ENCODE measurements at regions of chr10 and their contacts with region 1.

Region 1: GRCh38 chr10:24503461-24504320 is 220.0 kb downstream of the ARHGAP21 start:
- DNase-seq: no peak
- ATAC-seq: peak; percentile 33 to 60
- H3K4me3 ChIP-seq: no peak overlapping the region
- H3K27ac ChIP-seq: peak overlapping the region; percentile 5 to 45 (median 17)
- H3K4me1 ChIP-seq: peaks cover 3 to 6% of the 10 kb centered on the region in 2 donors
- H3K27me3 ChIP-seq: no peaks in the 10 kb centered on the region
- CTCF ChIP-seq: peak; percentile 17 to 57 (median 53)
- POLR2A ChIP-seq: no peak

Region 2: DNA sequence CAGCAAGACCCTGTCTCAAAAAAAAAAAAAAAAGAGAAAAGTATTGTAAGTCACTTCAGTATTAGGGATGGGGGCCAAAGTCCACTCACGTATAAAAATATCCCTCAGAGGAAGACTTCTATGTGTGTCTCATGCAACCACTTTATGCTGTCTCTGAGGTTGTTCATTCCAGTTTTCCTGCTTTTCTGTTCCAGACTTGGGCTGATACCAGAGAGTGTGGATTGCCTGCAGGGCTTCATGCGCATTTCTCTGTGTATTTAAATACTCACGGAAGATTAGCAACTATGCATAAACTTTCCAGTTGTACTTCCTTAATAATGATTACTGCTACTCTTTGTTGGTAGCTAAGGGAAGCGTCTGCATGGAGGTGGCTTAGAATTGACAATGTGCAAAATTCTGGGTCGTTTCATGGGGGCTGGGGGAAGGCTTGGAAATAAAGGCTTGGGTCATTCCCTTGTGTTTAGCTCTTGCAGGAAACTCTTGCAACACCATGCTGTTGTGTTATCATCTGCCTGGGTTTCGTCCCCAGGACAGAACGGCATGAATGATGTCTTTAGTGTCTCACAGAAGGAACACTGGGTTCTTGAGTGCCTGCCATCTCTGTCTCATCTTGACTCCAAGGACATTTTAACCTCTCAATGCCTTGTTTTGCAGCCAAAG is 240.6 kb before region 1 on chr10:
- in situ Hi-C with region 1: no loop called
- intact Hi-C with region 1: no loop called
- DNase-seq: peak; percentile 96
- ATAC-seq: peak; percentile 88 to 89
- H3K4me3 ChIP-seq: peak overlapping the region; percentile 2 to 33 (median 24)
- H3K27ac ChIP-seq: peak overlapping the region; percentile 94 to 98 (median 96)
- H3K4me1 ChIP-seq: peaks cover 72 to 83% of the 10 kb centered on the region in 2 donors
- H3K27me3 ChIP-seq: no peaks in the 10 kb centered on the region
- CTCF ChIP-seq: no peak
- POLR2A ChIP-seq: peak in 1 of 2 donors; percentile 15

Region 3: DNA sequence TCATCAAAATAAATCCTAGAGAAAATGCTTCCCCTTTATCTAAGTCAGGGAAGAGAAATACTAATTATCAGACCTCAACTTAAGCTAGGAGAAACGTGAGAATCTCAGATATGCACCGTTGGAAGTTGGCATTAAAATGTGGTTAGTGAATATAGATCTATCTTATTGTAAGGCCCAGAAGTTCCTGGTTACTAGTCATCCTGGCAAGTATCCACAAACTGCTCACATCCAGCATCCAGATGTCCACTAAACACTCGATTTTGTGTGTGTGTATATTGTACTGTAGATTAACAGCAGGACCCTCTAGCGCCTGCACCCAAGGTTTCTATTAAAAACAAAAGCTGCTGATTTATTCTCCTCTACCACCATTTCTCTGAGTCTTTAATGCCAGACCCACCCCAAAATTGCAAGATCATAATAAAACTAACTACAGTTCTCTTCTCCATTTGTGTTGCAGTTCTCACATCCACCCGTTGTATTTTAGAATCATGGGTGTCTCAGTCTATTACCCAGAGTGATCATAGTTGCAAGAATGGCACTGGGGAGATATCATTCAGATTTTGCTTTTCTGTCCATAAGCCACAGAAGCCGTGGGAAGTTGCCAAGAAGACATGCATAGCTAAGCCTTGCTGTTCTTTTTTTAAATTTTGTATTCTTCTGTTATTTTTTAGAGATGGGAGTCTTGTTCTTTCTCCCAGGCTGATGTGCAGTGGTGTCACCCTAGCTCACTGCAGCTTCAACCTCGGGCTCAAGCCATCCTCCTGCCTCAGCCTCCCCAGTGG is 129.4 kb before region 1 on chr10:
- in situ Hi-C with region 1: loop called in 2 of 4 experiments (anchors 25 kb)
- intact Hi-C with region 1: loop called (anchors 5 kb)
- DNase-seq: no peak
- ATAC-seq: no peak
- H3K4me3 ChIP-seq: no peak overlapping the region
- H3K27ac ChIP-seq: peak overlapping the region in 2 of 4 donors; percentile 12 to 97
- H3K4me1 ChIP-seq: peaks cover 41% of the 10 kb centered on the region in 2 donors
- H3K27me3 ChIP-seq: no peaks in the 10 kb centered on the region
- CTCF ChIP-seq: no peak
- POLR2A ChIP-seq: no peak

Region 4: DNA sequence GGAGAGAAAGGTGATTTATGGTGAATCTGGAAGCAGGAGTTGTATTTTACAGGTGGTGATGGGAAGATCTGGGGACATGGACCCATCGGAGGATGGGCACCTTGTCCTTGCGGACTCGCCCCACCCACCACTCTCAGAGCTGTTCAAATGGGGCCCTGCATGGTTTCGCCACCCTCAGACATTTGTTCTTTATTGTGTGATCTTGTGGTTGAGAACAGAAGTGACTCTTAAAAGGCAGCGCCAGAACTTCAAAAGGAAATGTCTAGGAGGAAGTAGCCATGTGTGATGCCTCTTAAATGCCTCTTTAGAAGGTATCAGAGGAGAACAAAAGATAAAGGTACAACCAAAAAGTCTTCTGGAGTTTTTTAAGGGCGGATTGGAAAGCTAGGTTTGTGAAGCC is 89.1 kb before region 1 on chr10:
- in situ Hi-C with region 1: no loop called
- intact Hi-C with region 1: no loop called
- DNase-seq: no peak
- ATAC-seq: no peak
- H3K4me3 ChIP-seq: no peak overlapping the region
- H3K27ac ChIP-seq: peak overlapping the region; percentile 84 to 97 (median 92)
- H3K4me1 ChIP-seq: peaks cover 54 to 57% of the 10 kb centered on the region in 2 donors
- H3K27me3 ChIP-seq: no peaks in the 10 kb centered on the region
- CTCF ChIP-seq: no peak
- POLR2A ChIP-seq: no peak

Region 5: GRCh38 chr10:24465891-24466818 is 37.5 kb before region 1 on chr10:
- in situ Hi-C with region 1: no loop called
- intact Hi-C with region 1: loop called (anchors 5 kb)
- DNase-seq: peak; percentile 45 to 53
- ATAC-seq: peak; percentile 53 to 70
- H3K4me3 ChIP-seq: peak overlapping the region; percentile 7 to 53 (median 34)
- H3K27ac ChIP-seq: peak overlapping the region; percentile 69 to 87 (median 83)
- H3K4me1 ChIP-seq: peaks cover 88% of the 10 kb centered on the region in 2 donors
- H3K27me3 ChIP-seq: no peaks in the 10 kb centered on the region
- CTCF ChIP-seq: no peak
- POLR2A ChIP-seq: peak; percentile 20 to 75

Region 6: GRCh38 chr10:24483489-24484100 is 20.1 kb before region 1 on chr10:
- in situ Hi-C with region 1: no loop called
- intact Hi-C with region 1: no loop called
- DNase-seq: peak in 1 of 2 donors; percentile 51
- ATAC-seq: peak; percentile 61 to 74
- H3K4me3 ChIP-seq: no peak overlapping the region
- H3K27ac ChIP-seq: peak overlapping the region; percentile 40 to 69 (median 57)
- H3K4me1 ChIP-seq: peaks cover 25 to 38% of the 10 kb centered on the region in 2 donors
- H3K27me3 ChIP-seq: no peaks in the 10 kb centered on the region
- CTCF ChIP-seq: no peak
- POLR2A ChIP-seq: no peak

Region 7: DNA sequence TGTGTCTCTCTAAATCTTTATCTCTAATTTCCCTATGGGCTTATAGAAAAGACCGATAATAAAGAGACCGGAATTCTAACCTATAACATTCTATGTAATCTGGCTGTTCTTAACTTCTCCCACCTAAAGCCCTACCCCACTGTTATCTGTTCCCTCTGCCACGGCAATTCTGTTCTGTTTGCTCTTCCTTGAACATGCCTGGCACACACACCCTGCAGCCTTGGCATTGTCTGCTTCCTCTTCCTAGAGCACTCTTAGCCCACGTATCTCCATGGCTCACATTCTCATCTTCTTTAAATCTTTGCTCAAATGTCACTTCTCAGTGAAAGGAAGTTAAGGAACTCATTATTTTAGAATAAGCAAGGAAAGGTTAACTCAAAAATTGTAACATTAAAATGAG is 980.3 kb after region 1 on chr10:
- in situ Hi-C with region 1: no loop called
- intact Hi-C with region 1: no loop called
- DNase-seq: no peak
- ATAC-seq: no peak
- H3K4me3 ChIP-seq: no peak overlapping the region
- H3K27ac ChIP-seq: no peak overlapping the region
- H3K4me1 ChIP-seq: no peaks in the 10 kb centered on the region
- H3K27me3 ChIP-seq: no peaks in the 10 kb centered on the region
- CTCF ChIP-seq: no peak
- POLR2A ChIP-seq: no peak

Measured in gastrocnemius medialis (tissue), 4 donors.